ENCODE measurements at regions of chr4 and their contacts with region 1.

Region 1: DNA sequence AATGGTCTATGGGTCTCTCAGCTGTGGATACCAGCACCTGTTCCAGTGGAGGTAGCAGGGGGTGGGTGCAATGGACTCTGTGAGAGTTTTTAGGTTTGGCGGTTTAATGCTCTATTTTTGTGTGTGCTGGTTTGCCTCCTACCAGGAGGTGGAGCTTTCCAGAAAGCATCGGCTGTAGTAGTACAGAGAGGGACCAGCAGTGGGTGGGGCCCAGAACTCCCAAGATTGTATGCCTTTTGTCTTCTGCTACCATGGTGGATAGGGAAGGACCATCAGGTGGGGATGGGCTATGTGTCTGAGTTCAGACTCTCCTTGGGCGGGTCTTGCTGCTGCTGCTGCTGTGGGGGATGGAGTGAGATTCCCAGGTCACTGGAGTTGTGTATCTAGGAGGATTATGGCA is 557.2 kb upstream of the GRID2 start:
- DNase-seq: no peak
- ATAC-seq: no peak
- H3K4me3 ChIP-seq: no peak overlapping the region
- H3K4me3 Mint-ChIP-seq: no peak overlapping the region
- H3K27ac ChIP-seq: no peak overlapping the region
- H3K27ac Mint-ChIP-seq: no peak overlapping the region
- H3K4me1 ChIP-seq: no peaks in the 10 kb centered on the region
- H3K4me1 Mint-ChIP-seq: no peaks in the 10 kb centered on the region
- H3K27me3 ChIP-seq: no peaks in the 10 kb centered on the region
- H3K27me3 Mint-ChIP-seq: no peaks in the 10 kb centered on the region

Region 2: DNA sequence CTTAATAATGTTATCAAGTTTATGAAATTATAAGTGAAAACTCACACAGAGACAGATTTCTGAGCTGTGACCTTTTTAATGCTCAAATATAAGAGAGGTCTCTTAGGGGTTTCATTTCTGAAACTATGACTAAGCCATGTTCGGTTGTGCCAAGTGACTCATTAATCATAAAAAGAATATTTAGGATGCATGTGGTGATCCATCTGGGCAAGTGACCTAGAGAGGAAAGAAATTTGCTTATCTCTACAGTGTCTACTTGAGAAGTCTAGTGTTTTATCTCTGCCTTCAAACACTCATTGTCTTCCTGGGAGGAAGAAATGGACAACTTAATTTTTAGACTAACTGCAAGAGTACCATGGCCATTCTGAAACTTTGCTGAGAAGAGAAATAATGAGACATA is 11.9 kb after region 1 on chr4:
- CTCF ChIA-PET with region 1: no interaction called
- POLR2A ChIA-PET with region 1: no interaction called
- DNase-seq: no peak
- ATAC-seq: no peak
- H3K4me3 ChIP-seq: no peak overlapping the region
- H3K4me3 Mint-ChIP-seq: no peak overlapping the region
- H3K27ac ChIP-seq: no peak overlapping the region
- H3K27ac Mint-ChIP-seq: no peak overlapping the region
- H3K4me1 ChIP-seq: no peaks in the 10 kb centered on the region
- H3K4me1 Mint-ChIP-seq: no peaks in the 10 kb centered on the region
- H3K27me3 ChIP-seq: no peaks in the 10 kb centered on the region
- H3K27me3 Mint-ChIP-seq: no peaks in the 10 kb centered on the region

Region 3: GRCh38 chr4:93147524-93148212 is 1401.1 kb after region 1 on chr4:
- CTCF ChIA-PET with region 1: no interaction called
- POLR2A ChIA-PET with region 1: interaction called in 1 of 2 experiments, 14 read pairs
- DNase-seq: no peak
- ATAC-seq: no peak
- H3K4me3 ChIP-seq: no peak overlapping the region
- H3K4me3 Mint-ChIP-seq: no peak overlapping the region
- H3K27ac ChIP-seq: no peak overlapping the region
- H3K27ac Mint-ChIP-seq: no peak overlapping the region
- H3K4me1 ChIP-seq: no peaks in the 10 kb centered on the region
- H3K4me1 Mint-ChIP-seq: no peaks in the 10 kb centered on the region
- H3K27me3 ChIP-seq: no peaks in the 10 kb centered on the region
- H3K27me3 Mint-ChIP-seq: no peaks in the 10 kb centered on the region